ENCODE measurements at regions of chr11 and their contacts with region 1.

Region 1: GRCh38 chr11:69010964-69011623 is 2.0 kb downstream of the MRGPRF start:
- DNase-seq: peak; percentile 88 to 89
- H3K4me3 ChIP-seq: peak overlapping the region; percentile 61 to 83
- H3K27ac ChIP-seq: peak overlapping the region; percentile 97 to 99
- H3K4me1 ChIP-seq: peaks cover 7 to 22% of the 10 kb centered on the region in 2 donors
- H3K27me3 ChIP-seq: no peaks in the 10 kb centered on the region
- CTCF ChIP-seq: peak in 1 of 4 experiments; percentile 3
- POLR2A ChIP-seq: peak; percentile 75 to 77

Region 2: GRCh38 chr11:69075421-69076128 is 64.5 kb after region 1 on chr11:
- intact Hi-C with region 1: loop called (anchors 10 kb)
- DNase-seq: peak; percentile 95 to 97
- H3K4me3 ChIP-seq: no peak overlapping the region
- H3K27ac ChIP-seq: peak overlapping the region; percentile 84 to 95
- H3K4me1 ChIP-seq: peaks cover 0 to 8% of the 10 kb centered on the region in 2 donors
- H3K27me3 ChIP-seq: no peaks in the 10 kb centered on the region
- CTCF ChIP-seq: no peak
- POLR2A ChIP-seq: no peak

Measured in uterus (tissue), 4 donors.